ENCODE measurements at regions of chr1 and their contacts with region 1.

Region 1: GRCh38 chr1:154961497-154962262 is at the start of gene PYGO2:
- DNase-seq: no peak
- H3K4me3 ChIP-seq: peak within 1 kb of the TSS; percentile 74
- CTCF ChIP-seq: peak; percentile 38

Region 2: GRCh38 chr1:154974063-154974807 is 12.6 kb after region 1 on chr1 and contains the start of gene CKS1B:
- CTCF ChIA-PET with region 1: interaction called, 47 read pairs
- POLR2A ChIA-PET with region 1: interaction called, 74 read pairs
- DNase-seq: peak; percentile 100
- H3K4me3 ChIP-seq: peak within 1 kb of the TSS; percentile 75
- CTCF ChIP-seq: no peak